Transverse colon (tissue), 4 donors: ENCODE measurements at regions of chr4 and their contacts with region 1.

Region 1: GRCh38 chr4:5429747-5430146 is 278.6 kb downstream of the EVC2 start:
- DNase-seq: no peak
- H3K4me3 ChIP-seq: no peak overlapping the region
- H3K27ac ChIP-seq: no peak overlapping the region
- H3K4me1 ChIP-seq: no peaks in the 10 kb centered on the region
- H3K27me3 ChIP-seq: no peaks in the 10 kb centered on the region
- CTCF ChIP-seq: no peak
- EP300 ChIP-seq: no peak
- POLR2A ChIP-seq: no peak

Region 2: DNA sequence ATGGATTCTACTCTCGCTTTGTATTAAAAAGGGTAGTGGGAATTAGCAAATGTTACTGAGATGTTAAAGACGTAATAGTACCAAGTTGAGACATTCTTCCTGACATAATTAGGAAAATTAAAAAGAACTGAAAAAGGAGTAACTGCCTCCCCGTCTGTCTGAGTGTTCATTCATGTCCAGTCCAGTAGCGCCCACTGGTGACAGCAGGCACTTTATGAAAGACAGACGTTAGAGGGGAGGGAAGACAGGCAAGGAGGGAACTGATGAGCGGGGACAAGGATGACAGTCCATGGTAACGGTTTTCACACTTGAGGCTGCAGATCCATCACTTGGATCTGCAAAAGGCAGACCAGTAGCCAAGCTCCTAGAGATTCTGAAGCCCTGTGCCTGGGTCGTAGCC is 51.7 kb before region 1 on chr4:
- in situ Hi-C with region 1: no loop called
- intact Hi-C with region 1: loop called (anchors 2 kb)
- DNase-seq: no peak
- H3K4me3 ChIP-seq: no peak overlapping the region
- H3K27ac ChIP-seq: no peak overlapping the region
- H3K4me1 ChIP-seq: no peaks in the 10 kb centered on the region
- H3K27me3 ChIP-seq: no peaks in the 10 kb centered on the region
- CTCF ChIP-seq: no peak
- EP300 ChIP-seq: no peak
- POLR2A ChIP-seq: no peak